Gastrocnemius medialis (tissue), 4 donors: ENCODE measurements at regions of chr17 and their contacts with region 1.

Region 1: GRCh38 chr17:20121359-20122253 is 112.4 kb downstream of the SPECC1 start:
- DNase-seq: peak in 1 of 2 donors; percentile 21
- ATAC-seq: peak in 1 of 2 donors; percentile 46
- H3K4me3 ChIP-seq: no peak overlapping the region
- H3K27ac ChIP-seq: no peak overlapping the region
- H3K4me1 ChIP-seq: peaks cover 0 to 4% of the 10 kb centered on the region in 2 donors
- H3K27me3 ChIP-seq: no peaks in the 10 kb centered on the region
- CTCF ChIP-seq: peak; percentile 54 to 82 (median 68)
- POLR2A ChIP-seq: no peak

Region 2: DNA sequence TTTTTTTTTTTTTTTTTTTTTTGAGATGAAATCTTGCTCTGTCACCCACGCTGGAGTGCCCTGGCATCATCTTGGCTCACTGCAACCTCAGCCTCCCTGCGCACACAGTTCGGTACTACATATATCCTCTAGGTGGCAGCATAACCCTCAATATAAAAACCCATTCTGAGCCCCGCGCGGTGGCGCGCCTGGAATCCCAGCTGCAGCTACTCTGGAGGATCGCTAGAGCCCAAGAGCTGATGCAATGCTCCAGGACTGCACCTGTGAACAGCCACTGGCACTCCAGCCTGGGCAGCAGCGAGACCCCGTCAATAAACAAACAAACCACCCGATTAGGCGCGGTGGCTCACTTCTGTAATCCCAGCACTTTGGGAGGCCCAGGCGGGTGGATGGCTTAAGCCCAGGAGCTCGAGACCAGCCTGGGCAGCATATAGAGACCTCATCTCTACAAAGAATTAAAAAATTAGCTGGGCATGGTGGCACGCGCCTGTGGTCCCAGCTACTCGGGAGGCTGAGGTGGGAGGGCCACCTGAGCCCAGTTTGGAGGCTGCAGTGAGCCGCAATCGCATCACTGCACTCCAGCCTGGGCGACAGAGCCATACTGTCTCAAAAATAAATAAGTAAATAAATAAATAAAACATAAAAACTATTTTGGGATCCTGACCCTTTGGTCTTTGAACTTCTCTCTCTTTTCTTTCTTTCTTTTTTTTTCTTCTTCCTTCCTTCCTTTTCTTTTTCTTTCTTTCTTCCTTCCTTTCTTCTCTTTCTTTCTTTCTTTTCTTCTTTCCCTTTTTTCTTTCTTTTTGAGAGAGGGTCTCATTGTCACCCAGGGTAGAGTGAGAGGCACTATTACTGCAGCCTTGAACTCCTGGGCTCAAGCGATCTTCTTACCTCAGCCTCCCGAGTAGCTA is 128.5 kb before region 1 on chr17:
- in situ Hi-C with region 1: loop called in 1 of 4 experiments (anchors 5 kb)
- intact Hi-C with region 1: loop called (anchors 1 kb)
- DNase-seq: peak; percentile 68 to 80
- ATAC-seq: peak; percentile 94 to 99
- H3K4me3 ChIP-seq: peak overlapping the region in 2 of 4 donors; percentile 5 to 29
- H3K27ac ChIP-seq: no peak overlapping the region
- H3K4me1 ChIP-seq: peaks cover 3 to 4% of the 10 kb centered on the region in 2 donors
- H3K27me3 ChIP-seq: no peaks in the 10 kb centered on the region
- CTCF ChIP-seq: peak; percentile 67 to 81 (median 69)
- POLR2A ChIP-seq: no peak

Region 3: DNA sequence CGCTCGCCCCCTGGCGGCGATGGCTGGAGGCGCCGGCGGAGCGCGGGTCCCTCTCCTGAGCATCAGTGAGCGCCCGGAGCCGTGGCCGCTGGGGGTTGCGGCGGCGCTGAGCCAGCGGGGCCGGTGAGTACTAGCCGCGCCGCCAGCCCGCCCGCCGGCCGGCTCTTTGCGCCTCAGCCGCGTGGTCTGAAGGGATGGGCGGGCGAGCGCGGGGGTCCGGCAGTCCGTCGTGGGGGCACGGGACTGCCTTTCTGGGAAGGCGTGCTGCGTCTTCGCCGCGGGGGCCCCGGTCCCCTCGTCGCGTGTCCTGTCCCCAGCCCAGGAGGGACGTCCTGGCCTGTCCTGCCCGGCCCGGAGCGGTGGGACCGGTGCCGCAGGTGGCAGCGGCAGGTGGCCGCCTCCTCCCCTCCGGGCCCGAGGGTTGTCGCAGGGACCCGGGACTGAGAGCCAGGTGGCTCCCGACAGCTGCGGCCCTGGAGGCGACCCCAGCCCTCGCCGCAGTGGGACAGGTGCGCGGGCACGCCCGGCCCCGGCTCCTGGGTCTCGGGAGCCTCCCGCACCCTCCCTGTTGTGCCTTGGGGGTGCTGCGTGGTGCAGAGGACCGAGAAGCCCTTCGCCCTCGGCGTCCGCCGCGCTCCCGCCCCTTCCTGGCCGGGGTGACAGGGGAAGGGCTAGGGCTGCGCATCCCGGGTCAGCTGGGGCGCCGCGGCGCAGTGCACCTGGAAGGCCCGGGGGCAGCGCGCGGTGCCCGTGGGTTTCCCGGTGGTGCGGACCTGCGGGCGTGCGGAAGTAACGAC is 112.1 kb before region 1 on chr17 and contains the start of gene SPECC1:
- in situ Hi-C with region 1: no loop called
- intact Hi-C with region 1: loop called (anchors 5 kb)
- DNase-seq: peak; percentile 44 to 63
- ATAC-seq: peak; percentile 14 to 37
- H3K4me3 ChIP-seq: peak within 1 kb of the TSS; percentile 56 to 70 (median 64)
- H3K27ac ChIP-seq: peak within 1 kb of the TSS; percentile 72 to 83 (median 76)
- H3K4me1 ChIP-seq: peaks cover 0 to 9% of the 10 kb centered on the region in 2 donors
- H3K27me3 ChIP-seq: peaks cover 8 to 41% (median 11%) of the 10 kb centered on the region in 3 donors
- CTCF ChIP-seq: peak; percentile 83 to 99 (median 96)
- POLR2A ChIP-seq: peak; percentile 32 to 55
- total RNA-seq, gene SPECC1: 6.1 to 17.9 (median 9.5) TPM

Region 4: DNA sequence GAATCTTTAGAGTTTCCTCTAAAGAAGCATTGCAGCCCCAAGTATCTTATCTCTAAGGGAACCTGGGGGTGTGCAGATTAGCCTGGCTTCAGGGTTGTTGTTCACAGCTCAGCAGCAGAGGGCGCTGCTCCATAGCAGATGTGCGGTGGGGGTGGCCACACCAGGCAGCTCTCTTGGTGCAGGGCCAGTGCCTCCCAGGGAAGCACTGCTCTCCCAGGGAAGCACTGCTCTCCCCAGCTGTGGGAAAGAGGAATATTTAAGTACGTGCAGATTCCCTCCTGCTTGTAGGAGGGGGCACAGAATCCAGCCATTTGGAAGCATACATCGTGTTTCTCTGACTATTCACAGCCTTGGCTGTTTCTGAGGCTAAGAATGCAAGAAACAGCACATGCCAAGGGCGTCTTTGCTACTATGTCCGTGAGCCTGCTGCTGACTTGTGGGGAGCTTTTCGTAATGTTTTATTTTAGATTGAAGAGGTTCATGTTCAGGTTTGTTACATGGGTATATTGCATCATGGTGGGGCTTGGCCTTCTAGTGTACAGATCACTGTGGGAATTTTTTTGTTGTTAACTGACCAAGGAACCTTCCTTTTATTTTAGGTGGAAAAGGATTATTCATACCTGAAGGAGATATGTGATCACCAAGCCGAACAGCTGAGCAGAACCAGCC is 105.3 kb after region 1 on chr17:
- in situ Hi-C with region 1: no loop called
- intact Hi-C with region 1: loop called (anchors 2 kb)
- DNase-seq: peak; percentile 34 to 56
- ATAC-seq: peak; percentile 63 to 68
- H3K4me3 ChIP-seq: no peak overlapping the region
- H3K27ac ChIP-seq: peak overlapping the region in 1 of 4 donors; percentile 77
- H3K4me1 ChIP-seq: peaks cover 3 to 4% of the 10 kb centered on the region in 2 donors
- H3K27me3 ChIP-seq: no peaks in the 10 kb centered on the region
- CTCF ChIP-seq: peak; percentile 64 to 76 (median 65)
- POLR2A ChIP-seq: no peak

Region 5: GRCh38 chr17:20315821-20316220 is 194.2 kb after region 1 on chr17:
- in situ Hi-C with region 1: no loop called
- intact Hi-C with region 1: loop called (anchors 2 kb)
- DNase-seq: no peak
- ATAC-seq: no peak
- H3K4me3 ChIP-seq: no peak overlapping the region
- H3K27ac ChIP-seq: no peak overlapping the region
- H3K4me1 ChIP-seq: no peaks in the 10 kb centered on the region
- H3K27me3 ChIP-seq: no peaks in the 10 kb centered on the region
- CTCF ChIP-seq: no peak
- POLR2A ChIP-seq: no peak